Panc1 (cell line): ENCODE measurements at regions of chr15 and their contacts with region 1.

Region 1: DNA sequence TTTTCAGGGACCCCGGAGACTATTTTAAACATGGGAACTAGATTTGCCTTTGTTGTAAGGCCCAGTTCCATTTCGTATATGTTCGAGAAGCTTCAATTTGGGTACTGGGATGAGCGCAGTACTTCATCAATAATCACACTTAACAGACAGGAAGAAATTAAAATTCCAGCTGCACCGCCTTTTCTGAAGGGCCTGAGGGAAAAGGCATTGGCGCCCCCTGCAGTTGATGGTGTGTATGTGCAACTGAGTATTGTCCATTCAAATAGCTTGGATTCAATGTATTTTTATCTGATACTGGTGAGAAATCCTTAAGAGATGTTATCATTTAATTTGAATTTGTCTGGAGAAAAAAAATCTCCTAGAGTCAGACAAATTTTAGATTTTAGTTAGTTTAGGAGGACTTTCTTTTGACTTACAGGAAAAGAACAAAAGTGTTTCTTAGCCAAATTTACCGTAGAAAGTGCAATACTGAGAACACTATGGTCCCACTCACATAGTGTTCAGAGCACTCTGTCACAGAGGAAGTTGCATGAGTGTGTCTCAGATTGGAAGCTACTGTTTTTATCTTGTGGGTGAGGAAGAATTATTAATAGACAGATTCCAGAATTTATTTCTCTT is 5.4 kb upstream of the ALDH1A2 start:
- DNase-seq: peak; percentile 24
- ATAC-seq: no peak; the same call in 1 of the 2 replicates
- H3K4me3 ChIP-seq: no peak overlapping the region
- H3K27ac ChIP-seq: no peak overlapping the region
- H3K4me1 ChIP-seq: no peaks in the 10 kb centered on the region
- H3K27me3 ChIP-seq: peaks cover 17% of the 10 kb centered on the region
- CTCF ChIP-seq: peak; percentile 94

Region 2: DNA sequence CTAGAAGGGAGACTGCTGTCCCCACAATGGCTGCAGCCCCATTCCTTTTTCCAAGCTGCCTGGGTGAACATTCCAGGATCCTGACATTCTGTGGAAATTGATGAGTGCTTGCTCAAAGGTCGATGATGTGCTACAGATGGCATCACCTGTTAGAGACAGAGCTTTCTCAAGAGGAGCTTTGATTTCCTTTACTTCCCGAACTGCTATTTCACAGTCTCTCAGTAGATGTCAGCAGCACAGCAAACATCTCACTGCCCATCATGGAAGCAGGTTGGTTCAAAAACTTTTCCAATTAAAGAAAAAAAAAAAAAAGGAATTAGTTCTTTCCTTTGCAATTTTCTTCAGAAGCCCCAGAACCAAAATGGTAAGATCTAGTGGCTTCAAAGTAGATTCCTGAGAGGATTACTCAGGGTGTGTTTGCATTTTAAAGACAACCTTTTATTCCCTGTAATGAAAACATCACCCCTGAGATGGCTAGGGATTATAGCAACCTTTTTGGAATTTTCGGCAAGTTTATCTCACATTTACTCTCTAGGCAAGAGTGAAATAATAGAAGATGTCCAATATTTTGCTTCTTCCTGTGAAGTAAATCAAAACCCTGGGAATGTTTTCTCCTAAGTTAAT is 319.6 kb before region 1 on chr15:
- CTCF ChIA-PET with region 1: interaction called, 10 read pairs
- POLR2A ChIA-PET with region 1: no interaction called
- in situ Hi-C with region 1: no loop called
- intact Hi-C with region 1: no loop called
- DNase-seq: no peak
- ATAC-seq: no peak
- H3K4me3 ChIP-seq: no peak overlapping the region
- H3K27ac ChIP-seq: no peak overlapping the region
- H3K4me1 ChIP-seq: no peaks in the 10 kb centered on the region
- H3K27me3 ChIP-seq: 0 out of 2 replicates have a peak, but pooled peaks cover 3% of the 10 kb centered on the region
- CTCF ChIP-seq: peak; percentile 69

Region 3: DNA sequence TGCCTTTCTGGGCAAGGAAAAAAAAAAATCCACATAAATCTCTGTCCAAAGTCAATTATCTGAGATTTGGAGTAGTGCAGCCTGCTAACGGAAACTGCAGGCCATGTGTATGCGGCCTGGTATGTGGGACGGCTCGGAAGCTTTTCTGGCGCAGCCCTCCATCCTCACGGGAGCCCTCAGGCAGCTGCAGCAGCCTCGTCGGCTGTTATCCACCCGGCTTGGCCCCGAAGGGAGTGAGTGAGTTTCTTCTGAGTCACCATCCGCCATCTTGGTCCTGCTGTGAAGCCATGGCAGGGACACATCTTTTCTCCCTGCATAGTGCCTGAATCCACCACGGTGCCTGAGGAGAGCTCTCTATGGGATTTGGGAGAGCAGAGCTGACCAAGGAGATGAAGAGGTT is 301.6 kb before region 1 on chr15:
- CTCF ChIA-PET with region 1: no interaction called
- POLR2A ChIA-PET with region 1: no interaction called
- in situ Hi-C with region 1: no loop called
- intact Hi-C with region 1: no loop called
- DNase-seq: no peak
- ATAC-seq: no peak
- H3K4me3 ChIP-seq: no peak overlapping the region
- H3K27ac ChIP-seq: no peak overlapping the region
- H3K4me1 ChIP-seq: no peaks in the 10 kb centered on the region
- H3K27me3 ChIP-seq: 0 out of 2 replicates have a peak, but pooled peaks cover under 1% of the 10 kb centered on the region
- CTCF ChIP-seq: no peak

Region 4: GRCh38 chr15:58057559-58057958 is 13.4 kb before region 1 on chr15:
- CTCF ChIA-PET with region 1: no interaction called
- POLR2A ChIA-PET with region 1: no interaction called
- in situ Hi-C with region 1: no loop called
- intact Hi-C with region 1: no loop called
- DNase-seq: no peak
- ATAC-seq: no peak
- H3K4me3 ChIP-seq: no peak overlapping the region
- H3K27ac ChIP-seq: no peak overlapping the region
- H3K4me1 ChIP-seq: no peaks in the 10 kb centered on the region
- H3K27me3 ChIP-seq: peaks cover 5% of the 10 kb centered on the region
- CTCF ChIP-seq: no peak

Region 5: DNA sequence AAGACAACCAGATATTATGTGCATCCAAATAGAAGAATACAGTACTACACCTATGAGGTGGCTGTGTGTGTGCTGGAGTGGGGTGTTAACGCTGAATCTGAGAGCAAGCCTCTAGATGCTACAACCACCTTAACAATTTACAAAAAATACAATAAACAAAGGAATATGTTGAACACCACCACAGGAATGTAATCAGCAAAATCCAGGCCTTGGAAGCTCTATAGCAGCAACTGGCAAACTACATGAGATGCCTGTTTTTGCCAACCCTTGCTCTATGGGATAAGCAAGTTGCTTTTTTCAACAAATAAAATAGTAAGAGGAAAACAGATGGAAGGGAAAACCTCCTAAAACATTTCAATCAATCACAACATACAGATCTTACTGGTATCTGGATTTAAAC is 838.7 kb after region 1 on chr15:
- CTCF ChIA-PET with region 1: interaction called, 12 read pairs
- POLR2A ChIA-PET with region 1: no interaction called
- in situ Hi-C with region 1: no loop called
- intact Hi-C with region 1: no loop called
- DNase-seq: no peak
- ATAC-seq: 0 out of 2 replicates have a peak, but pooled peaks have one; percentile 48
- H3K4me3 ChIP-seq: no peak overlapping the region
- H3K27ac ChIP-seq: no peak overlapping the region
- H3K4me1 ChIP-seq: no peaks in the 10 kb centered on the region
- H3K27me3 ChIP-seq: no peaks in the 10 kb centered on the region
- CTCF ChIP-seq: no peak